Activated CD4-positive, alpha-beta T cell treated with anti-CD3 and anti-CD28 coated beads for 36 hours (primary cell): ENCODE measurements at regions of chr3 and their contacts with region 1.

Region 1: DNA sequence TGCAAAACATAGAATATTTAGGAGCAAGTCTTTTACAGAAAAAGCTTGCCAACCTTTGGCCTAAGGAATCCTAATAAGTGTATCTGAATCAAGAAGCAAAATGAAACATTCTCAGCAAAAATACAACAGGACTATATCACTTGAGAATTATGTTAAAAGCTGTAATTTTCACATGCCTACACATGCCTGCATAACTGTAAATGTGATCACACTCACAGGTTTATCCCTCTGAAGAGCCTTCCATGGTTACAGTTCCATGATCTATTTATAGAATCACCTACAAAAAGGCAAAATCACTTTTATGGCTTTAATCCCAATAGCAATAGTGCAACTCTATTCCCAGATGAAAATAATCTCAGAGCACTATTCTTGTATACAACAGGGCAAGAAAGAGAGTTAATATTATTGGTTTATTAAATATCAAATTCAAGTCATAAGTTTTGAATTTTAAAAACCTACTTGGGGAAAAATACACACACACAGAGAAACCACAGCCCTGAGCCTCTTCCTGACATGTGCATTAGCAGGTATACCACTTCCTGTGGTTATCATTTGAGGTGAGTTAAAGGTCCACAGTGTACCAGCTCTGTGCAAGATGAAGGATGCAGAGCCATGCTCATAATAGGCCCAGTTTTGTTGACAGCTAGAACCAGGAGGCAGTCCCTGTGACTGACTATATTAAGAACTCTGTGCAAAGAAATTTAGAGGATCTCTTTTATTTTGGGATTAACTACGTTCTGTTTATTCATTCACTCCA is 252.5 kb upstream of the TGFBR2 start:
- DNase-seq: peak; percentile 63
- ATAC-seq: peak; percentile 97
- H3K4me3 Mint-ChIP-seq: no peak overlapping the region
- H3K27ac Mint-ChIP-seq: no peak overlapping the region
- H3K4me1 Mint-ChIP-seq: peaks cover 73% of the 10 kb centered on the region
- H3K27me3 Mint-ChIP-seq: peaks cover 8% of the 10 kb centered on the region

Region 2: DNA sequence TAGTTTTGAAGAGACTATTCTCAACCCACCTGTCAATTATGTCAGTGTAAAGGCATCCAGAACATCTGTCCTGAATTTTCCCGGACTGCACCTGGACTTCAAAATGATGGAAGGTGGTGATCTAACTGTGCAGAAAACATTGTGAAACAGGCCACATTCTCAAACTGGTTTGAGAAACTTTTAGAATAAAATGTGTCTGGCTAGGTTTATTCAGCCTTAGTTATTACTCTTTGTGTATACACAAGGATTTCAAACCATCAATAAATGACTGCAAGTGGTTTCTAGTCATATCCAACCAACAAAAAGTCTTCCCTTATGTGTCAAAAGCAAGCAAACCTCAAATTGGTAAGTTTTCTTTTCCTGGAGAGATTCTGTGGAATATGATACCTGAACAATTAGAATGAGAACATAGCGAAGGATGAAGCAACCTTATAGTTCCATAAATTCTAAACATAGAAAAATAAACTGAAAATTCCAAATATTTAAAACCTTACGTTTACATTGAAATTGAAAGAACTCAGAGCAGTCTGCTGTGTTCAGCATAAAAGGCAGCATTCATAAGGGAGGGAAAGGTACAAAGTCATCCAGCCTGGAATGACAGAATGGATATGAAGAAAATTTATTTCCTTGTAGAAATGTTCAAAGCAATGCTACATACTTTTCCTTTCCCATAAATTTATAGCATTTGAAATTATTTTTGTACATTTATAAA is 54.1 kb before region 1 on chr3:
- CTCF ChIA-PET with region 1: no interaction called
- POLR2A ChIA-PET with region 1: no interaction called
- intact Hi-C with region 1: loop called in 1 of 2 experiments (anchors 2 kb)
- DNase-seq: no peak
- ATAC-seq: no peak
- H3K4me3 Mint-ChIP-seq: no peak overlapping the region
- H3K27ac Mint-ChIP-seq: no peak overlapping the region
- H3K4me1 Mint-ChIP-seq: peaks cover 10% of the 10 kb centered on the region
- H3K27me3 Mint-ChIP-seq: peaks cover 3% of the 10 kb centered on the region